ENCODE measurements at regions of chr22 and their contacts with region 1.

Region 1: GRCh38 chr22:21573750-21574494 is 6.4 kb downstream of the UBE2L3 start:
- DNase-seq: no peak
- H3K4me3 ChIP-seq: no peak overlapping the region
- H3K27ac ChIP-seq: peak overlapping the region; percentile 36; the same call in 1 of the 2 replicates
- H3K4me1 ChIP-seq: peaks cover 0 to 8% (median 6%) of the 10 kb centered on the region in 4 experiments; a peak in 4 of 7 replicates
- H3K27me3 ChIP-seq: no peaks in the 10 kb centered on the region
- CTCF ChIP-seq: no peak
- EP300 ChIP-seq: no peak
- POLR2A ChIP-seq: no peak
- RAD21 ChIP-seq: no peak

Region 2: DNA sequence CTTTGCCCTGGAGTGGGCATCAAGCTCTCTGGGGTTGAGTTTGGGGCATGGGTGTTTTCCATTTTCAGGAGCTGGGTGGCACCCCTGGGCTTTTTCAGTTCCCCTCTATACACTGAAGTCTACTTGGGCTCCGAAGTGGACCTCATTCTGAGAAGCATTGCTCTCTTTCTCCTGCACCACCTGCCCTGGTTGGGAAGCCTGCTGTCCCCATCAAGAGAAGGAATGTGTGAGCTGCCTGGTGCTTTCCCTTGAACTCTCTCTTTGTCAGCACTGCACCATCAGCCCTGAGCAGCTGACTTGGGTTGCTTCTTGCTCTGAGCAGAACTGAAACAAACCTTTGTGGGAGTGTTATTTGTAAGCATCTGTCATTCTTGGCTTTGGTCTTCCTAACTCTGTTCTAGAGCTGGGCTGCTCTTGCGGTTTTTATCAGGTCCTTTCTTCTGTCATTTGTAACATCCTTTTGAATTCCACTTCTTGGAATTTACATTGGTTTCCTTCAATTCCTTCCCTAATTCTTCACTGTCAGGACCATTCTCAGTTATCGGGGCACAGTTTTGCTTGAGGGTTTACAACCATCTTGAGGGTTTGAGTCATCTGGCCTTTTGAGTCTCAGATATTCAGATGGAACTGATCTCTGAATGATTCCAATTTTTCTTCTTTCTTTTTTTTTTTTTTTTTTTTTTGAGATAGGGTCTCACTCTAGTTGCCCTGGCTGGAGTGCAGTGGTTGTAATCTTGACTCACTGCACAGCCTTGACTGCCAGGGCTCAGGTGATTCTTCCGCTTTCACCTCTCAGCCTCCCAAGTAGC is 14.1 kb after region 1 on chr22:
- CTCF ChIA-PET with region 1: interaction called, 18 read pairs
- POLR2A ChIA-PET with region 1: interaction called, 9 read pairs
- DNase-seq: no peak
- H3K4me3 ChIP-seq: no peak overlapping the region
- H3K27ac ChIP-seq: no peak overlapping the region
- H3K4me1 ChIP-seq: no peaks in the 10 kb centered on the region
- H3K27me3 ChIP-seq: no peaks in the 10 kb centered on the region
- CTCF ChIP-seq: no peak
- EP300 ChIP-seq: no peak
- POLR2A ChIP-seq: no peak
- RAD21 ChIP-seq: no peak

Region 3: GRCh38 chr22:21606775-21607174 is 32.9 kb after region 1 on chr22:
- CTCF ChIA-PET with region 1: interaction called, 11 read pairs
- POLR2A ChIA-PET with region 1: interaction called, 4 read pairs
- DNase-seq: no peak
- H3K4me3 ChIP-seq: no peak overlapping the region
- H3K27ac ChIP-seq: no peak overlapping the region
- H3K4me1 ChIP-seq: no peaks in the 10 kb centered on the region
- H3K27me3 ChIP-seq: no peaks in the 10 kb centered on the region
- CTCF ChIP-seq: no peak
- EP300 ChIP-seq: no peak
- POLR2A ChIP-seq: no peak
- RAD21 ChIP-seq: no peak

Measured in H1 (cell line).